Endothelial cell of umbilical vein (primary cell): ENCODE measurements at regions of chr2 and their contacts with region 1.

Region 1: DNA sequence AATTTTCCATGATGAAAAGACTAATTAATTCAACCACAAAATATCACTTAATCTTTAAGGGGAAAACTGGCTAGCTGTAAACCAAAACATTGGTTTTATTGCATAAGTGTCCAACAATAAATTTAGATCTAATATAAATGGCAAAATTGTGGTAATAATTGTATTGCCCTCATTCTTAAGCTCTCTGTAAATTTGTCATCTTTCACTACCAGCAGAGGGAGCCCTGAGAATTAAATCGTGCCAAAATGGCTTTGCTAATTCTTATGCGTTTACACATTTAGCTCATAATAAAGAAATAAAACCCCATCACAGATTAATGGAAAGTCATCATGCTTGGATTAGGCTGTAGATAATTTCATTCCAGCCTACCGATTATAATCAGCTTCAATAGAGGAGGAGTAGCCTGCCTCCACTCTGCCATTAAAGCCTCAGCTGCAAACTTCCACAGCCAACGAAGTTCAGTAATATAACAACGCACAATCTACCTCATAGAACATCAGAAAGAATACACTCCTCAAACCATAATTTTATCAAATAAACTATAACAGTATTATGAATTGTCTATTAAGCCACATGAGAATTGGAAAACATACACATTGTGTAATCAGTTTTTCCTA is 70.0 kb upstream of the ATP5MC3 start:
- DNase-seq: peak; percentile 48
- H3K4me3 ChIP-seq: no peak overlapping the region
- H3K27ac ChIP-seq: no peak overlapping the region
- H3K4me1 ChIP-seq: no peaks in the 10 kb centered on the region
- H3K27me3 ChIP-seq: peaks cover 12 to 16% of the 10 kb centered on the region in 2 experiments
- CTCF ChIP-seq: peak; percentile 46 to 57
- POLR2A ChIP-seq: no peak

Region 2: GRCh38 chr2:175147186-175147585 is 104.3 kb before region 1 on chr2:
- CTCF ChIA-PET with region 1: no interaction called
- POLR2A ChIA-PET with region 1: no interaction called
- dilution Hi-C with region 1: no loop called
- intact Hi-C with region 1: no loop called
- DNase-seq: no peak
- H3K4me3 ChIP-seq: no peak overlapping the region
- H3K27ac ChIP-seq: no peak overlapping the region
- H3K4me1 ChIP-seq: peaks cover 3% of the 10 kb centered on the region
- H3K27me3 ChIP-seq: no peaks in the 10 kb centered on the region
- CTCF ChIP-seq: no peak
- POLR2A ChIP-seq: no peak

Region 3: GRCh38 chr2:175203621-175204496 is 47.7 kb before region 1 on chr2:
- CTCF ChIA-PET with region 1: interaction called, 22 read pairs
- POLR2A ChIA-PET with region 1: no interaction called
- dilution Hi-C with region 1: no loop called
- intact Hi-C with region 1: loop called (anchors 1 kb)
- DNase-seq: peak; percentile 54
- H3K4me3 ChIP-seq: no peak overlapping the region
- H3K27ac ChIP-seq: no peak overlapping the region
- H3K4me1 ChIP-seq: no peaks in the 10 kb centered on the region
- H3K27me3 ChIP-seq: peaks cover 0 to 13% of the 10 kb centered on the region in 2 experiments
- CTCF ChIP-seq: peak; percentile 39 to 54
- POLR2A ChIP-seq: no peak

Region 4: GRCh38 chr2:175227393-175227792 is 24.1 kb before region 1 on chr2:
- CTCF ChIA-PET with region 1: interaction called, 17 read pairs
- POLR2A ChIA-PET with region 1: no interaction called
- dilution Hi-C with region 1: no loop called
- intact Hi-C with region 1: no loop called
- DNase-seq: no peak
- H3K4me3 ChIP-seq: no peak overlapping the region
- H3K27ac ChIP-seq: no peak overlapping the region
- H3K4me1 ChIP-seq: no peaks in the 10 kb centered on the region
- H3K27me3 ChIP-seq: no peaks in the 10 kb centered on the region
- CTCF ChIP-seq: no peak
- POLR2A ChIP-seq: no peak

Region 5: DNA sequence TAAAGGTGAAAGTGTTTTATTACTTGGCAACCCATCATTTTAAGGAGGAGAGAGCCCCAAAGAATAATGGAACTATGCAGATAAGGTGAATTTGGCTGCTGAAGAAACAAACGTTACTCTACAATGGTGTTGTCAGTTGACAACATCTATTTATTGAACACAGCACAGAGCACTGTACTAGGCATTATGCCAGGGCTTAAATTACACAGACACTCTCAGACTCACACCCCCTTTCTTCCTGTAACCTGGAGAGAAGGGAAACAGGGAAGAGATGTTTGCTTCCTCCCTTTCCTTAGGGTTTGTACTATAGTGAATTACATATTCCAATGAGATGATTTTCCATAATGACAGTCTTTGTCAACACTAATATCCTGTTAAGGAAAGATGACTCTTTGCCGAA is 24.0 kb after region 1 on chr2:
- CTCF ChIA-PET with region 1: interaction called, 49 read pairs
- POLR2A ChIA-PET with region 1: no interaction called
- dilution Hi-C with region 1: no loop called
- intact Hi-C with region 1: no loop called
- DNase-seq: no peak
- H3K4me3 ChIP-seq: no peak overlapping the region
- H3K27ac ChIP-seq: no peak overlapping the region
- H3K4me1 ChIP-seq: no peaks in the 10 kb centered on the region
- H3K27me3 ChIP-seq: peaks cover 2 to 3% of the 10 kb centered on the region in 2 experiments
- CTCF ChIP-seq: no peak
- POLR2A ChIP-seq: no peak

Region 6: DNA sequence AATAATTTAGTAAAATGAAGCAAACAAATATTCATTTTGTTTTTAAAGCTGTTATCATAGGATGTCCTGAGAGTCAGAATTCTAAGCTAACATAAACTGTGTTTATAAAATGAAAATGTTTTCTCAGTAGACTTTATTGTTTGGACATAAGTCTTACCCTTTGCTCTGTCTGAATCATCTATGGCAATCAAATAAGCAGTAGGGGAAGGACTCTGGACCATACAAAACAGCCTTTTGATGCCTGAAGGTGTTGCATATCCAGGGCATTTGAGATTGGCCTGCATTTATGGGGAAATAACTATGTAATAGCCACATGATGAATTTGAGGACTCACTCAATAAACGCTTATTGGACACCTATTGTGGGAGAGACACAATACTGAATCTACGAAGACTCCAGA is 53.0 kb after region 1 on chr2:
- CTCF ChIA-PET with region 1: interaction called, 10 read pairs
- POLR2A ChIA-PET with region 1: no interaction called
- dilution Hi-C with region 1: no loop called
- intact Hi-C with region 1: no loop called
- DNase-seq: no peak
- H3K4me3 ChIP-seq: no peak overlapping the region
- H3K27ac ChIP-seq: no peak overlapping the region
- H3K4me1 ChIP-seq: no peaks in the 10 kb centered on the region
- H3K27me3 ChIP-seq: peaks cover 0 to 14% of the 10 kb centered on the region in 2 experiments
- CTCF ChIP-seq: no peak
- POLR2A ChIP-seq: no peak

Region 7: GRCh38 chr2:175366815-175367214 is 115.3 kb after region 1 on chr2:
- CTCF ChIA-PET with region 1: interaction called, 10 read pairs
- POLR2A ChIA-PET with region 1: no interaction called
- dilution Hi-C with region 1: no loop called
- intact Hi-C with region 1: no loop called
- DNase-seq: peak; percentile 70
- H3K4me3 ChIP-seq: no peak overlapping the region
- H3K27ac ChIP-seq: no peak overlapping the region
- H3K4me1 ChIP-seq: no peaks in the 10 kb centered on the region
- H3K27me3 ChIP-seq: peaks cover 5 to 34% of the 10 kb centered on the region in 2 experiments
- CTCF ChIP-seq: peak; percentile 74 to 75
- POLR2A ChIP-seq: no peak

Region 8: GRCh38 chr2:176096986-176097819 is 845.7 kb after region 1 on chr2:
- CTCF ChIA-PET with region 1: interaction called, 113 read pairs
- POLR2A ChIA-PET with region 1: no interaction called
- dilution Hi-C with region 1: no loop called
- intact Hi-C with region 1: loop called (anchors 1 kb)
- DNase-seq: peak; percentile 72
- H3K4me3 ChIP-seq: peak overlapping the region in 1 of 3 experiments; percentile 17
- H3K27ac ChIP-seq: no peak overlapping the region
- H3K4me1 ChIP-seq: peaks cover 5% of the 10 kb centered on the region
- H3K27me3 ChIP-seq: peaks cover 87 to 97% of the 10 kb centered on the region in 2 experiments
- CTCF ChIP-seq: peak; percentile 83 to 93
- POLR2A ChIP-seq: no peak